ENCODE measurements at regions of chr16 and their contacts with region 1.

Region 1: DNA sequence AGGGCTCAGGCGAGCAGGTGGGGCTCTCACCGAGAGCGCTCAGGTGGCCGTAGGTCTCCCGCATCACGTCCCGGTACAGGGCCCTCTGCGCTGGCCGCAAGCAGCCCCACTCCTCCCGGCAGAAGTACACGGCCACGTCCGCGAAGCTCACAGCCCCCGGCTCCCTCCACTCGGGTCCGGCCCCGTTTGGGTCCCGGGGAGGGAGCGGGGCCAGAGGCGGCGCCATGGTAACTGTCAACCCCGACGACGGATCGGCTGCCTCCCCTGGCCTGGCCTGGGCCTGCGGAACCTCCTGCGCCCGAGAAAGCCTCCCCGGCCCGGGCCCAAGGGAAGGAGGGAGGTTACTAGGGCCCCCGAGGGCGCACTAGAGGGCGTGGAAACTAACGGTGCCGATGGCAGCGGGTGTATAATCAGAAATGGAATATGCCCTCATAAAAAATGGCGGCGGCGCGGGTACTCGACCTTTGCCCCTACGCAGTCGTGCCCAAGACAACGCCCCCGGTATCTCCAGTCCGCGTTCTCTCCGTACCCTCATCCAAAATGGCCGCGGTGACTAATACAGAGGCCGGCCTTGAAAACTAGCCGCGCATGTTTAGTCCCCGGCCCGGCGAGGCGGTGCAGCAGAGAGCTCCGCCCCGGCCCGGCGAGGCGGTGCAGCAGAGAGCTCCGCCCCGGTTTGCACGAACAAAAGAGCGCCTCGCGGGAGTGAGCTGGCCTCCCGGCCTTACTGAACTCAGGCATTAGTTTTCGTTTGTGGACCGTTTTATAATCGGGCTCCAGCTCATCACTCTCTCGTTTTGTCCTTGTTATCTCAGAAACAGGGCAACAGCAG is at the start of gene ZNF764:
- DNase-seq: peak; percentile 98 to 99 (median 98)
- ATAC-seq: peak; percentile 96 to 98 (median 98)
- H3K4me3 ChIP-seq: peak within 1 kb of the TSS; percentile 63 to 98 (median 77)
- H3K27ac ChIP-seq: peak within 1 kb of the TSS; percentile 86 to 99 (median 94)
- H3K4me1 ChIP-seq: peaks cover 0 to 67% (median 31%) of the 10 kb centered on the region in 12 donors
- H3K27me3 ChIP-seq: no peaks in the 10 kb centered on the region
- CTCF ChIP-seq: peak in 2 of 12 donors; percentile 6 to 20
- POLR2A ChIP-seq: peak in 1 of 2 donors; percentile 58
- total RNA-seq, gene ZNF764: 8.5 to 17.2 (median 12.3) TPM

Region 2: GRCh38 chr16:30526823-30527635 is 31.1 kb before region 1 on chr16:
- intact Hi-C with region 1: loop called in 2 of 10 experiments (anchors 1 kb)
- DNase-seq: peak; percentile 99 to 100 (median 99)
- ATAC-seq: peak; percentile 93 to 97 (median 94)
- H3K4me3 ChIP-seq: peak overlapping the region; percentile 35 to 98 (median 86)
- H3K27ac ChIP-seq: peak overlapping the region; percentile 95 to 100 (median 99)
- H3K4me1 ChIP-seq: peaks cover 0 to 44% (median 19%) of the 10 kb centered on the region in 12 donors
- H3K27me3 ChIP-seq: no peaks in the 10 kb centered on the region
- CTCF ChIP-seq: peak in 10 of 12 donors; percentile 5 to 53 (median 28)
- POLR2A ChIP-seq: peak; percentile 38 to 86

Region 3: DNA sequence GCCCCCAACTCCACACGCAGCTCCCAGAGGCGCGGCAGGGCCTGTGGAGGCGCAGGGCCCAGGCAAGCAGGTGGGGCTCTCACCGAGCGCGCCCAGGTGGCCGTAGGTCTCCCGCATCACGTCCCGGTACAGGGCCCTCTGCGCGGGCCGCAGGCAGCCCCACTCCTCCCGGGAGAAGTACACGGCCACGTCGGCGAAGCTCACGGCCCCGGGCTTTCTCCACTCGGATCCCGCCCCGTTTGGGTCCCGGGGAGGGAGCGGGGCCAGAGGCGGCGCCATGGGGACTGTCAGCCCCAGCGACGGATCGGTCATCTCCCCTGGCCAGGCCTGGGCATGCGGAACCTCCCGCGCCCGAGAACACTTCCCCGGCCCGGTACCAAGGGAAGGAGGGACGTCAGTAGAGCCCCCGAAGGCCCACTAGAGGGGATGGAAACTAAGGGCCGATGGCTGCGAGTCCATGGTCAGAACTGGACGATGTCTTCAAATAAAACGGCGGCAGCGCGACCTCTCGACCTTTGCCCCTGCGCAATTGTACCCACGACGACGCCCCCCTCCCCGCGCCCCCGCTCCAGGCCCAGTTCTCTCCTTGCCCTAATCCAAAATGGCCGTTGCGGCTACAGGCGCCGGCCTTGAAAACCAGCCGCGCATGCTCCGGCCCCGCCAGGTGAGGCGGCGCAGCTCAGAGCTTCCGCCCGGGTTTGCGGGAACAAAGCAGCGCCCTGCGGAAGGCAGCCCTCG is 23.6 kb before region 1 on chr16 and contains the start of gene ZNF747:
- intact Hi-C with region 1: loop called (anchors 1 to 2 kb)
- DNase-seq: peak; percentile 95 to 96 (median 96)
- ATAC-seq: peak; percentile 88 to 95 (median 90)
- H3K4me3 ChIP-seq: peak within 1 kb of the TSS; percentile 31 to 94 (median 82)
- H3K27ac ChIP-seq: peak within 1 kb of the TSS; percentile 86 to 99 (median 94)
- H3K4me1 ChIP-seq: peaks cover 0 to 34% (median 21%) of the 10 kb centered on the region in 12 donors
- H3K27me3 ChIP-seq: no peaks in the 10 kb centered on the region
- CTCF ChIP-seq: peak in 2 of 12 donors; percentile 12 to 13
- POLR2A ChIP-seq: peak in 1 of 2 donors; percentile 63
- total RNA-seq, gene ZNF747: 8.6 to 15.2 (median 10.5) TPM

Region 4: DNA sequence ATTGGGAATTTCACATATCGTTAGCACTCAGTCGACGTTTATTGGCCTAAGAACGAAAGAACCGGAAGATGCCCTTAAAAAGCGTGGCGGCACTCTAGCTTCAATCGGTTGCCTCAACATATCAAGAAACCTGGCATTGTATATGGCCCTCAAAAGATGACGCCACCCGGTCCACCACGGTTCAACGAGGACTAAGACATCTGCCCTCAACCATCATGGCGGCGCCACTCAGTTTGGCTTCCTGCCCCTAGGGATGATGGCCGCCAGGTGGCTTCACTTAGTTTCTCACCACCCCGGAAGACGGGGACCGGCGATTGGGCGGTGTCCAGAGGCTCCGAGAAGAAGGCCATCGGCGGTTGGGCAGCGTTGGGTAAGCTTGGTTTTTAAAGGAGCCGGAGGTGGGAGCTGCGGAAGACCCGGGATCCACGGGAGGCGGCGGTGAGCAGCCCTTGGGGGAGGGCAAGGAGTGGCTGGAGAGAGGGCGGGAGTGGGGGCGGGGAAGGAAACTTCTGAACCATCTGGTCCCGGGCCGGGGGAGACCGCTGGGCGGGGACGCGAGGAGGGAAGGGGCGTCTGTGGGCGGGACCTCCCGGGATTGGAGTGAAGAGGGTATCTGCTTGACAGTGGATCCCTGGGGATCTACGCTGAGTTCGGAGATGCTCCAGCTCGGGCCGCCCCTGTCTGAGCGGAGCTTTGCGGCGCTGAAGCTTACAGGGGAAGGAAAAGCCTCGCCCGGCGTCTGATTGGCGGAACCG is 92.4 kb after region 1 on chr16 and contains the start of gene PRR14:
- intact Hi-C with region 1: loop called in 1 of 10 experiments (anchors 1 kb)
- DNase-seq: peak; percentile 100
- ATAC-seq: peak; percentile 92 to 95 (median 93)
- H3K4me3 ChIP-seq: peak within 1 kb of the TSS; percentile 60 to 93 (median 76)
- H3K27ac ChIP-seq: peak within 1 kb of the TSS; percentile 69 to 99 (median 95)
- H3K4me1 ChIP-seq: peaks cover 0 to 26% (median 14%) of the 10 kb centered on the region in 12 donors
- H3K27me3 ChIP-seq: no peaks in the 10 kb centered on the region
- CTCF ChIP-seq: peak in 10 of 12 donors; percentile 19 to 54 (median 34)
- POLR2A ChIP-seq: peak in 1 of 2 donors; percentile 32
- total RNA-seq, gene PRR14: 12.3 to 26.6 (median 20.2) TPM

Region 5: GRCh38 chr16:30740364-30741251 is 182.4 kb after region 1 on chr16:
- intact Hi-C with region 1: no loop called
- DNase-seq: peak; percentile 80 to 91 (median 82)
- ATAC-seq: peak; percentile 73 to 90 (median 84)
- H3K4me3 ChIP-seq: peak overlapping the region in 2 of 12 donors; percentile 8 to 18
- H3K27ac ChIP-seq: peak overlapping the region in 8 of 12 donors; percentile 9 to 65 (median 52)
- H3K4me1 ChIP-seq: peaks cover 0 to 33% (median 22%) of the 10 kb centered on the region in 12 donors
- H3K27me3 ChIP-seq: no peaks in the 10 kb centered on the region
- CTCF ChIP-seq: no peak
- POLR2A ChIP-seq: no peak

Measured in heart left ventricle (tissue), 16 donors.